GM10248 (cell line): ENCODE measurements at regions of chr2 and their contacts with region 1.

Region 1: DNA sequence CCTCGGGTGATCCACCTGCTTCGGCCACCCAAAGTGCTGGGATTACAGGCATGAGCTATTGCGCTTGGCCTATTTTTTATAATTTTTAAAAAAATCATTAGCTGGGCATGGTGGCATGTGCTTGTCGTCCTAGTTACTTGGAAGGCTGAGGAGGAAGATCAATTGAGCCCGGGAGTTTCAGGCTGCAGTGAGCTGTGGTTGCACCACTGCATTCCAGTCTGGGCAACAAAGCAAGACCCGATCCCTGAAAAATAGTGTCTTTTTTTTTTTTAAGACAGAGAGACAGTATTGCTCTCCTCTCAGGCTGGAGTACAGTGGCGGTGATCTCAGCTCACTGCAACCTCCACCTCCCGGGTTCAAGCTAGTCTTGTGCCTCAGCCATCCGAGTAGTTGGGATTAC is 4.8 kb downstream of the SSB start:
- DNase-seq: no peak
- CTCF ChIP-seq: no peak

Region 2: GRCh38 chr2:169824373-169825333 is 21.2 kb after region 1 on chr2 and contains the start of gene METTL5:
- CTCF ChIA-PET with region 1: interaction called, 21 read pairs
- POLR2A ChIA-PET with region 1: interaction called, 3 read pairs
- DNase-seq: peak; percentile 88
- CTCF ChIP-seq: peak; percentile 100